ENCODE measurements at regions of chr1 and their contacts with region 1.

Region 1: DNA sequence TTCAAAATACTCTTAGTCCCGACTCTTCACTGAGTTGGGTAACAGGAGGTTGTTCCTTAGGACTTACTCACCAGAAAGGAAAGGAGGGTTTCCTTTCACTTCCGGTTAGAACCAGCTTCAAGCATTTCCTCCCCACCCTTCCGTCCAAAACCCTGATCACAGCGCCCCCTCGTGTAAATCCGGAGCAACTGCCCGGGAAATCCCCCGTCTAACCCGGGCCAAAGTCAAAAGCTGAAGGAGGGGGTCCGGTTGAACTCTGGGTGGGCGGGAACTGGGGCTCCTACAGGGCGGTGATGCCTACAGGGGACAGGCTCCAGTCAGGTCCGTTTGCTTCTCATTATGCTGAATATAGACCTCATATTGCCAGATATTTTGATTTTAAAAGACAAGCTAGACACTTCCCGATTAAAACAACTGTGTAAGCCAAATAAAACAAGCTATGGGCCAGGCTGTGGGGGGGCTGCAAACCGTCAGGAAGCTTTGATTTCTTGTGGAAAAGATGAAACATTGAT is 15.0 kb upstream of the MTARC2 start:
- DNase-seq: peak; percentile 79
- ATAC-seq: peak; percentile 94 to 96

Region 2: DNA sequence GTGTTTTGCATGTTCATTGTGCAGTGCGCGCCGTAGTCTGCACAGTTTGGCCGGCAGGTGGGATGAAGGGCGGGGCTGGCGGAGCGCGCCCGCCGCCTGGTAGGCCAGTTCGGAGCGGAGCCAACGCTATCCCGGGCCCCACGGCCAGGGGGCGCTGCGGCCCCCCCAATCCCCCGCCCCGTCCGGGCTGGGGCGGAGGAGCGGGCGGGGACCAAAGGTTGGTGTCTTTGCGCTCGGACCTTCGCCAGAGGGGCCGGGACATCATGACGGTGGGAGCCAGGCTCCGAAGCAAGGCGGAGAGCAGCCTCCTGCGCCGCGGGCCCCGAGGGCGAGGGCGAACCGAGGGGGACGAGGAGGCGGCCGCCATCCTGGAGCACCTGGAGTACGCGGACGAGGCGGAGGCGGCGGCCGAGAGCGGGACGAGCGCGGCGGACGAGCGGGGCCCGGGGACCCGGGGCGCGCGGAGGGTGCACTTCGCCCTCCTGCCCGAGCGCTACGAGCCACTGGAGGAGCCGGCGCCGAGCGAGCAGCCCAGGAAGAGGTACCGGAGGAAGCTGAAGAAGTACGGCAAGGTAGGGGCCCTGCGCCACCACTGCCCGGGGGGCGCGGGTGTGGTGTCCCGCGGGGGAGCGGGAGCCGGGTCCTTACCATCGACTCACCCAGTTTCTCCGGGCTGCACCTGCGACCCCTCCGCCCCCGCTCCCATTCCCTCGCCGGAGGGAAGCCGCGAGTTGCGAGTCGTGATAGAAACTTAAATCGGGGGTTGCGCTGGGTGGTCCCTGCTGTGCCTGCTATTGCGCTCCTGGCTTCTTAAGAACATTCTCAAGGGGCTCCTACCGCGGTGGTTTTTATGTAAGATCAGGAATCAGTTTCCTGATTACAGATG is 42.8 kb before region 1 on chr1 and contains the start of gene C1orf115:
- intact Hi-C with region 1: loop called (anchors 2 to 5 kb)
- DNase-seq: peak; percentile 77
- ATAC-seq: peak; percentile 97 to 98
- total RNA-seq, gene C1orf115: 22.9 to 31.2 TPM

Region 3: DNA sequence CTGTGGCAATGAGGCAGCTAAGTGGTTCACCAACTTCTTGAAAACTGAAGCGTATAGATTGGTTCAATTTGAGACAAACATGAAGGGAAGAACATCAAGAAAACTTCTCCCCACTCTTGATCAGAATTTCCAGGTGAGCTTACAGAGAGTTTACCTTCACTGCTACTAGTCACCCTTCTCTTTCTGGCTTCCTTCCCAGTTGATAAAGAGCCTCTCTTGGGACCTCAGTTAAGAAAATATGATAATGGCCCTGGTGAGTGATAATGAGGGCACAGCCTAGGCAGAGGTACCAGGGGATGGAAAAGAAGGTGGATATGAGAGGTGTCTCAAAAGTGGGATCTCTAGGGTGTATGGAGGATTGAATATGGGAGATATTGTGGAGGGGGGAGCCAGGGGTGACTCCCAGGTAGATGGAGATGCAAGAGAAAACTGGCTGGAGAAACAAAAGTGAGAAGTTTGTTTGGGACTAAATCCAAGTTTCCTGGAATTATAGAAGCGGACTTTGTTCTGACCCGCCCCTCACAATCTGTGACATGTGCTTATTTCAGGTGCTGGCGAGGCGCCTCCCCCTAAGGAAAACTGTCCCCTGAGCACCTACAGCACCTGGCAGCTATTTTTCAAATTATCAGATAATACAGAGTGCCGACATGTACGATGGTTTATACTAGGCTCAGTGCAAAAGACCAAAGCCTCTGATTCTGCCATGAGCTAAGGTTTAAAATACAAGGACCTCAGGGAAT is 28.7 kb after region 1 on chr1:
- intact Hi-C with region 1: loop called in 1 of 2 experiments (anchors 2 kb)
- DNase-seq: no peak
- ATAC-seq: no peak

Measured in left cardiac atrium (tissue), 4 donors.